ENCODE measurements at regions of chr13 and their contacts with region 1.

Region 1: DNA sequence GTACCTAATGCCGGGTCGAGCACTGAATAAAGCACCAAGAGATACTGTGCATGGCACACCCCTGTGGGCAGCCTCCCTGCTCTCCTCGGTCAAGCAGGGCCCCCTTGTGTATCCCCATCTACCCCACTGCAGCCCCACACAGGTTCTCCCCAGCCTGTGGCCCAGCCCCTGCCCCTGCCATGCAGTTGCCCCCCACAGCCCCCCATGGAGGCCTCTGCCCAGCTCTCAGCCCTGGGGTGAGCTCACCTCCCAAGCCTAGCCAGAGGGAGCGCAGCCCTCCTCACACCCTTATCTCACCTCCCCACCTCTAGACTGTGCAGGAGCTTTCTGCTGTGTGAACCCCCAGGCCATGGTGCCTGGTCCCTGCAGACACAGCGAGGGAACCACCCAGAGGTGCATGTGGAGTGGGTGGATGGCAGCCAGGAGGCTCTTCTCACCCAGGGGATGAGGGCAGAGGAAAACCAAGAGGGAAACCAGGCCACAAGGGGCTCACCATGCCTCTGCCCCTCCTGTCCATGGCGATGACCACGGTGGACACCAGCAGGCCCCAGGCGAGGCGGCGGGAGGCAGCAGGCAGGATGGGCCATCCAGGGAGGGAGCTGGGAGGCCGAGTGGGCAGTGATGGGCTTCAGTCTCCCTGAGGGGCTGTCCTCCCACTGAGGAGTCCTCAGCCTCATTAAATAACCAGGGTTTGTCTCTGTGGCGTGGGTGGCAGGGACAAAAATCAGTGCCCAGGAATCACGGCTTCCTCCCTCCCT is 83.2 kb downstream of the ANKRD10 start:
- DNase-seq: no peak
- ATAC-seq: no peak; the same call in 1 of the 3 replicates
- H3K4me3 ChIP-seq: no peak overlapping the region
- H3K27ac ChIP-seq: no peak overlapping the region
- H3K4me1 ChIP-seq: no peaks in the 10 kb centered on the region; a peak in 1 of 5 replicates
- H3K27me3 ChIP-seq: peaks cover 10 to 39% of the 10 kb centered on the region in 2 experiments; a peak in 4 of 5 replicates
- CTCF ChIP-seq: no peak
- EP300 ChIP-seq: no peak
- POLR2A ChIP-seq: no peak
- RAD21 ChIP-seq: no peak

Region 2: DNA sequence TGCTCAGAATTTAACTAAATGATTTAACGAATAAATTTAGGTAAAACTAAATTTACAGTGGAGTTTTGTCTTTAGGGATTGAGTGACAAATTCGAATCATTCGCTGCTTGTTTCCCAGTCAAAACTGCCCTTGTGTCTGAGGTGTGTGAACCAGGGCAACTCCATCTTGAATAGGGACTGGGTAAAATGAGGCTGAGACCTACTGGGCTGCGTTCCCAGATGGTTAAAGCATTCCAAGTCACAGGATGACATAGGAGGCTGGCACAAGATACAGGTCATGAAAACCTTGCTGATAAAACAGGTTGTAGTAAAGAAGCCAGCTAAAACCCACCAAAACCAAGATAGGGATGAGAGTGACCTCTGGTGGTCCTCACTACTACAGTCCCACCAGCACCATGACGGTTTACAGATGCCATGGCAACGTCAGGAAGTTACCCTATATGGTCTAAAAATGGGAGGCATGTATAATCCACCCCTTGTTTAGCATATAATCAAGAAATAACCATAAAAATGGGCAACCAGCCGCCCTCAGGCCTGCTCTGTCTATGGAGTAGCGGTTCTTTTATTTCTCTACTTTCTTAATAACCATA is 93.5 kb after region 1 on chr13:
- CTCF ChIA-PET with region 1: no interaction called
- POLR2A ChIA-PET with region 1: no interaction called
- in situ Hi-C with region 1: loop called (anchors 10 kb)
- intact Hi-C with region 1: loop called (anchors 2 kb)
- DNase-seq: peak in 1 of 4 experiments; percentile 49
- ATAC-seq: 0 out of 3 replicates have a peak, but pooled peaks have one; percentile 29
- H3K4me3 ChIP-seq: no peak overlapping the region
- H3K27ac ChIP-seq: no peak overlapping the region
- H3K4me1 ChIP-seq: peaks cover 3% of the 10 kb centered on the region in 2 experiments; a peak in 3 of 5 replicates
- H3K27me3 ChIP-seq: no peaks in the 10 kb centered on the region
- CTCF ChIP-seq: peak; percentile 29 to 49 (median 40); a peak in 4 of 6 replicates
- EP300 ChIP-seq: no peak
- POLR2A ChIP-seq: no peak
- RAD21 ChIP-seq: peak in 1 of 2 experiments; percentile 59; a peak in 2 of 4 replicates

Region 3: DNA sequence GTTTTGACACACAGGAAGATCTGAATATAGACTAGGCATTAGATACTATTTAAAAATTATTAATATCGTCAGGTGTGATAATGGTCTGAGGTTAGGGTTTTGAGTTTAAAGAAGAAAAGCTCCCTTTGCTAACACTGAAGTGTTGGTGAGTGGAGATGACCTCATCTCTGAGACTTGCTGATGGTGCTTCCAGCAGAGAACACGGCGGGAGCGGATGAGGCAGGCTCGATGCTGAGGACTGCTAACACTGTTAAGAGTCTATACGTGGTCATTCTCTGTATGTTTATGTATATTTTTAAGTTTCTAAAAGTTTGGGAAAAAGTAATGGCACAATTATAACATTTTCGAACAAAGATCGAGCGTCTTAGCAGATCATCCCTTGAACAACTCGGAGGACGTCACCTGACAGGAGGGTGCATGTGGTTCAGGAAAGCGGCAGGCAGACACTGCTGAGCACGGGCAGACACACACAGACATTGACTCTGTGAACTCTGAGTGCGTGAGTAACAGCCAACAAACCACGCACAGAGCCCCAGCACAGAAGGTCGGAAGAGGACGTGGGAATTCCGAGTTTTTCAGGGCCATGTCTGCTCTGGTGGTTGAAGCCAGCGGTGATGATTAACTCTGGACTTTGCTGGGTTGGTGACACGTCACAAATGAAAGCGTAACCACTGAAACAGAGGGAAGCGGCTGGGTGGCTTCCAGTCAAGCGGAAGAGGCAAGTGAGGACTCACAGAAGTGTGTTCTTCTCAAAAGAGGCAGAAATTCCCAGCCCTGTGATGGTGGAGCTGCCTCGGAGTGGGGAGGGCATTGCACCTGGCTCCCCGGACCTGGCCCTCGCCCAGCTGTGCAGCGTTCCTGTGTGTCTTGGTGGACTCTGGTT is 396.9 kb after region 1 on chr13:
- CTCF ChIA-PET with region 1: no interaction called
- POLR2A ChIA-PET with region 1: no interaction called
- in situ Hi-C with region 1: no loop called
- intact Hi-C with region 1: no loop called
- DNase-seq: no peak
- ATAC-seq: no peak
- H3K4me3 ChIP-seq: no peak overlapping the region
- H3K27ac ChIP-seq: no peak overlapping the region
- H3K4me1 ChIP-seq: no peaks in the 10 kb centered on the region
- H3K27me3 ChIP-seq: no peaks in the 10 kb centered on the region
- CTCF ChIP-seq: no peak
- EP300 ChIP-seq: no peak
- POLR2A ChIP-seq: no peak
- RAD21 ChIP-seq: no peak